MCF 10A (cell line): ENCODE measurements at regions of chr12 and their contacts with region 1.

Region 1: DNA sequence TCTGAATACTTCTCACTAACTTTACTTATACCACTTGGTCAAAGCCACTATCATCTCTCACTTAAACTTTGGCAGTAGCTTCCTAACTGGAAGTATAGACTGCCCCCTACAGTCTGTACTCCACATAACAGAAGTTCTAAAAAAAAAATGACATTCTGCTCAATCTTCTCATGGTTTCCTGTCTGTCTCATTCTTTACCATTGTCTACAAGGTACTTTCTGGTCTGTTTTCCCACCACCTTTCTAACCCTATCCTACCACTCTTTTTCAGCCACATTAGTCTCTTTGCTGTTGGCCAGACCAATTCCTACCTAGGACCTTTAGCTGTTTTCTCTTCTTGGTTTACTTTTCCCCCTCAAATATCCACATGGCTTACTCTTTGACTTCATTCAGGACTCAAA is 14.7 kb downstream of the CPSF6 start:
- DNase-seq: peak; percentile 62
- H3K4me3 Mint-ChIP-seq: no peak overlapping the region
- H3K27ac Mint-ChIP-seq: peak overlapping the region; percentile 64
- H3K4me1 Mint-ChIP-seq: peaks cover 22% of the 10 kb centered on the region
- H3K27me3 Mint-ChIP-seq: no peaks in the 10 kb centered on the region
- CTCF ChIP-seq: peak; percentile 69

Region 2: GRCh38 chr12:68865399-68866164 is 388.5 kb before region 1 on chr12:
- CTCF ChIA-PET with region 1: interaction called, 4 read pairs
- POLR2A ChIA-PET with region 1: no interaction called
- intact Hi-C with region 1: loop called (anchors 5 kb)
- DNase-seq: no peak
- H3K4me3 Mint-ChIP-seq: no peak overlapping the region
- H3K27ac Mint-ChIP-seq: no peak overlapping the region
- H3K4me1 Mint-ChIP-seq: no peaks in the 10 kb centered on the region
- H3K27me3 Mint-ChIP-seq: no peaks in the 10 kb centered on the region
- CTCF ChIP-seq: no peak

Region 3: DNA sequence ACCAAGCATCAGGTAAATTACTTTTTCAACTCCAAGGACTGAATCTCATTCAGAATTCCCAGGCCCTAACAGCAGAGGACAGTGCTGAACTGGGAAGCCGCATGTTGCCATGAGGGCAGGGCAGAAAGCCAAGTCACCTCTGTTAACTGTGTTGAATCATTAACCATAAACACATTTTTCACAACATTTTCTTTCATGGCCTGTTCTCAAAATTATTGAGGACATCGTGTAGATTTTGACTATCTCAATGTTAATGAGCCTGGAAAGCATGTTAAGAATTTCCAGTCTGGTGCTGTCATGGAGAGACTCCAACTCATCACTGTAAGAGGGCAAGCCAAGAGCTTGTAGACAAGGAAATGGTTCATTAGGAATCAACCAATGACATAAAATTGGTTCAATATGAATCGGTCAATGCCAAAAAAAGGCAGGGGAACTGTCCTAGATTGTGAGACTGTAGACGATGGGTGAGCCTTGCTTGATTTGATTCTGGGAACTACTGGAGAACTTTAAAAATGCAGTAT is 354.7 kb before region 1 on chr12:
- CTCF ChIA-PET with region 1: interaction called, 3 read pairs
- POLR2A ChIA-PET with region 1: no interaction called
- intact Hi-C with region 1: loop called (anchors 10 kb)
- DNase-seq: peak; percentile 84
- H3K4me3 Mint-ChIP-seq: no peak overlapping the region
- H3K27ac Mint-ChIP-seq: peak overlapping the region; percentile 72
- H3K4me1 Mint-ChIP-seq: peaks cover 8% of the 10 kb centered on the region
- H3K27me3 Mint-ChIP-seq: no peaks in the 10 kb centered on the region
- CTCF ChIP-seq: peak; percentile 78

Region 4: DNA sequence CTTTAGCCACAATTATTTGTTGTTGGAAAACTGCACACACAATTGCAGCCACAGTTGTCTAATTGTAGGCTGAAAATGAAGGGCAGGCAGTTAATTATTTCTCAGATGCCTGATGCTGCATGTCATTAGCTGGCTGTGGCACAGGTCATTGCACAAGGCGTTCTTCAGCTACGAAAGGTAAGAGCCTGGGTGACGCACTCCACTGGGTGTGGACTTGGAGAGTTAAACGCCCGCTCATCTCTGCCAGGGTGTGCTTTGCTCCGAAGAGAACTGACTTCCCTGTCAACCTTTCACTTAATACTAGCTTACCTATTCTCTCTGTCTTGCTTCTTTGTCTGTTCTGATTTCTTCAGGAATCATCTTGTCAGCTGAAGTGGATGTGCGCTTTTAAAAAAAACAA is 229.6 kb before region 1 on chr12:
- CTCF ChIA-PET with region 1: no interaction called
- POLR2A ChIA-PET with region 1: no interaction called
- intact Hi-C with region 1: no loop called
- DNase-seq: peak; percentile 96
- H3K4me3 Mint-ChIP-seq: peak overlapping the region; percentile 61
- H3K27ac Mint-ChIP-seq: peak overlapping the region; percentile 88
- H3K4me1 Mint-ChIP-seq: peaks cover 35% of the 10 kb centered on the region
- H3K27me3 Mint-ChIP-seq: no peaks in the 10 kb centered on the region
- CTCF ChIP-seq: no peak

Region 5: DNA sequence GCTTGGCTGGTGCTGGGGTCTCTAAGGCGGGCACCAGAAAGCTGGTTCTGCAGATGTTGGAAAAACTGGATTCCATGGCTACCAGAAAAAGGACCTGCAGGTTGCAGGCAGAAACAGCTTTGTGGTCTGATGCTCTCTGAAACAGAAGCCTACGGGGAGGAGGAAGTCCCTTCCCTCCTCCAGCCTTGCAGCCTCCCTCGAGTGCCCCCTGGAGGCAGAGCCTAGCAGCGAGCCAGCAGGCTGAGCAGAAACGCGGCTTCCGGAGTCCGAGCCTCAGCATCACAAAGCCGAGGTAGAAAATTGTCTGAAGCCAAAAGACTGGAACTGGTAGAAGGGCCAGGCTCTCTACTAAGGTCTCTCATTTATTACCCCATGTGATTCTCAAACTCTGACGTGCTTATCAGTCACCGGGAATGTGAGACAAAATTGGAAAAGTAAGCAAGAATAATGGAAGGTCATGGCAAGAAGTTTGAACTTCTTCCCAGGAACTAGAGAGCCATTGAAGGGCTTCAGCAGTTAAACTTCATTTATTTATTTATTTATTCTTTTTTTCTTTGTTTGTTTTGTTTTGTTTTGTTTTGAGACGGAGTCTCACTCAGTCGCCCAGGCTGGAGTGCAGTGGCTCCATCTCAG is 96.9 kb before region 1 on chr12:
- CTCF ChIA-PET with region 1: interaction called, 13 read pairs
- POLR2A ChIA-PET with region 1: interaction called, 9 read pairs
- intact Hi-C with region 1: loop called (anchors 1 kb)
- DNase-seq: peak; percentile 71
- H3K4me3 Mint-ChIP-seq: no peak overlapping the region
- H3K27ac Mint-ChIP-seq: no peak overlapping the region
- H3K4me1 Mint-ChIP-seq: peaks cover 11% of the 10 kb centered on the region
- H3K27me3 Mint-ChIP-seq: no peaks in the 10 kb centered on the region
- CTCF ChIP-seq: peak; percentile 63

Region 6: DNA sequence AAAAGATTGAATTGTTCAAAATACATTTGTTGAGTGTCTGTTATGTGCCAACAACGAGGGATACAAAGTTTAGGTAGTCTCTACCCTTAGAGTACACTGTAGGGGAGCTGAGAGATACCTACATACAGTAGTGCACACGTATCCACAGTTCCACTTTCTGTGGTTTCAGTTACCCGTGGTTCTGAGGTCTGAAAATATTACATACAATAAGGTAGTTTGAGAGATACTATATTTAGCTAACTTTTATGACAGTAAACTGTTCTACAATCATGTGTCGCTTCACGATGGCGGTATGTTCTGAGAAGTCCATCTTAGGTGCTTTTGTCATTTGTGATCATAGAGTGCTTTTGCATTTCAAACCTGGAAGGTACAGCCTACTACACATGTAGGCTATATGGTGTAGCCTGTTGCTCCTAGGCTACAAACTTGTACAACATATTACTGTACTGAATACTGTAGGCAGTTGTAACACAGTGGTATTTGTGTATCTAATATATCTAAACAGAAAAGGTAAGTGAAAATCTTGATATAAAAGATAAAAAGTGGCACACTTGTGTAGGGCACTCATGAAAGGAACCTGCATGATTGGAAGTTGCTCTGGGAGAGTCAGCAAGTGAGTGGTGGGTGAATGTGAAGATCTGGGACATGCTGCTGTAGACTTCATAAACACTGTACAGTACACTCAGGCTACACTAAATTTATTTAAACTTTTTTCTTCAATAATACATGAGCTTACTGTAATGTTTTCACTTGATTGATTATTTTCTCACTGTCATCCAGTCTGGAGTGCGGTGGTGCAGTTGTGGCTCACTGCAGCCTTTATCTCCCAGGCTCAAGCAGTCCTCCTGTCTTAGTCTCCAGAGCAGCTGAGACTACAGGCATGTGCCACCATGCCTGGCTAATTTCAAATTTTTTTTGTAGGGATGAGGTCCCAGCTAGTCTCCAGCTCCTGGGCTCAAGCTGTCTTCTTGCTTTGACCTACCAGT is 10.7 kb before region 1 on chr12:
- CTCF ChIA-PET with region 1: interaction called, 9 read pairs
- POLR2A ChIA-PET with region 1: interaction called, 11 read pairs
- intact Hi-C with region 1: no loop called
- DNase-seq: no peak
- H3K4me3 Mint-ChIP-seq: no peak overlapping the region
- H3K27ac Mint-ChIP-seq: no peak overlapping the region
- H3K4me1 Mint-ChIP-seq: peaks cover 35% of the 10 kb centered on the region
- H3K27me3 Mint-ChIP-seq: no peaks in the 10 kb centered on the region
- CTCF ChIP-seq: no peak

Region 7: DNA sequence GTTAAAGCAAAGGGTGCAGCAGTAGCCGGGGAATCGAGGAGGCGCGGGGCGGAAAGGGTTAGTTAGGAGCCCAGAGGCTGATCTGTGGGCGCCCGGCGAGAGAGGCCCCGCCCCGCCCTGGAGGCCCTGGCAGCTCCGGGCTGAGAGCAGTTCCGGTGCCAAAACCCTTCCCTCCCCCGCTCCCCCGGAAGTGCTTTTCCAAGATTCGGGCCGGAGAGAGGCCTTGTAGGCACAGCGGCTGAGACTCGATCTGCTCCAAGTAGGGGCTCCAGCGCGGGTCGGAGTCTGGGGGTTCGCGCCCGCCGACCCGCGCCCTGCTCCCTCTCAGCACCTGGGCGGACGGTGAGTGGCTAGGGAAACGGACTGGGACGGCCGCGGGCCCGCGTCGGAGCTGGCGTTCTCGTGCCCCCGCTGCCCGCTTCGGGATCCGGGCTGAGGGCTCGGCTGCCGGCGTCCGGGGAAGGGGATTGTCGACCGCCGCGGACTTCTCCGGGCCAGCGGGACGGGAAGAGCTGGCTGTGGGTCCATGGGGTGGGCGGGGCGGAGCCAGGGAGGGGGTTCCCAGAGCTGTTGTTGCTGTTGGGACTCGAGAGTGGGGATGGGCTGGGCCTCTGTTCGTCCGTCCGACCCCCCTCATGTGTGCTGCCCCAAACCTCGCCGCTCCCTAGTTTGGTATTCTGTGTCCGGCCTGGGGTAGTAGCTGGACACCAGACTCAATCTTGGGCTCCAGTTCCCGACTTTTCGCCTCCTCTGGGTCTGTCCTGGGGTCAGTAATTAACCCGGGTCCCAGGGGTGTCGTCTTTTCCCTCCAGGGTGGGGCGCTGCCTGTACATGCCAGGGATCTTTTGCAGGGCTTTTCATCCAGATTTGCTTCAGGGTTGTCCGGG is 216.4 kb after region 1 on chr12 and contains the start of gene FRS2:
- CTCF ChIA-PET with region 1: no interaction called
- POLR2A ChIA-PET with region 1: no interaction called
- intact Hi-C with region 1: no loop called
- DNase-seq: peak; percentile 90
- H3K4me3 Mint-ChIP-seq: peak within 1 kb of the TSS; percentile 95
- H3K27ac Mint-ChIP-seq: peak within 1 kb of the TSS; percentile 97
- H3K4me1 Mint-ChIP-seq: peaks cover 63% of the 10 kb centered on the region
- H3K27me3 Mint-ChIP-seq: no peaks in the 10 kb centered on the region
- CTCF ChIP-seq: peak; percentile 59
- total RNA-seq, gene FRS2: 21.3 and 28.1 TPM in 2 replicates